ENCODE measurements at regions of chr14 and their contacts with region 1.

Region 1: DNA sequence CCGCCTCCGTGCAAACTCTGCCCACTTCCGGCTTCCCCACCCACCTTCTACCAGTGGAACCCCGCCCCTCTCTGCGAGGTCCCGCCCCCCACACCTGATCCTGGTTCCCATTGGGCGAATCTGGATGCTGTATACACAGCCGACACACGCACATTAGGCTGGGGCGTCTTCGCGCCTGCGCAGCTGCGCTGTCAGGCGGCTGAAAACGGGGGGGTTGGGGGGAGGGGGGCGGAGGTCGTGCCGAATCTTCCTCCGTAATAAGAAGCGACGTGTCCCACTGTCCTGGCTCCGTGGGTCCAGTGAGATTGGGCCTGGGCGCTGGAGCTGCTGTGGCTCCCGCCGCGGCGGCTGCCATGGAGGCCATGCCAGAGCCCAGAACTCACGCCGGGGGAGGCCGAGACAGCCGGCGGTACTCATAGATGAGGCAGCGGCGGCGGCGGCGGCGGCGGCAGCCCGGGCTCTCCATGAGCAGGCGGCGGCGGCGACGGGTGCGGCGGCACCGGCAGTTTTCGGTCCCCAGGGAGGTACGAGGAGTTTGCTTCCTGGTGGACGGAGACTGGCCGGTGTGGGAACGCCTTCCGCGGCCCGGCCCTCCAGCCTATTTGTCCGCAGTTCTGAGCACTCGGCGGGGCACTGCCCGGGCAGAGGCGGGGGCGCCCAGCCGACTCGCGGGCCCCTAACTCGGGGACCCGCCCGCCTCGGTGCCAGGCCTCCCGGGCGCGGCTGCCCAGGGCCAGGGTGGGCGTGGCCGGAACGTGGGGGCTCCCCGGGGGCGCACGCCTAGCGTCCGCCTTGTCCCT is 64.5 kb downstream of the KLHL28 start:
- DNase-seq: peak; percentile 98
- H3K4me3 ChIP-seq: peak overlapping the region; percentile 87
- H3K27ac ChIP-seq: peak overlapping the region; percentile 58
- H3K4me1 ChIP-seq: peaks cover 17% of the 10 kb centered on the region
- CTCF ChIP-seq: no peak

Region 2: GRCh38 chr14:44736326-44736725 is 160.9 kb before region 1 on chr14:
- CTCF ChIA-PET with region 1: no interaction called
- POLR2A ChIA-PET with region 1: no interaction called
- intact Hi-C with region 1: no loop called
- DNase-seq: no peak
- H3K4me3 ChIP-seq: no peak overlapping the region
- H3K27ac ChIP-seq: no peak overlapping the region
- H3K4me1 ChIP-seq: no peaks in the 10 kb centered on the region
- CTCF ChIP-seq: no peak

Region 3: GRCh38 chr14:44767642-44768173 is 129.5 kb before region 1 on chr14:
- CTCF ChIA-PET with region 1: no interaction called
- POLR2A ChIA-PET with region 1: no interaction called
- intact Hi-C with region 1: no loop called
- DNase-seq: no peak
- H3K4me3 ChIP-seq: no peak overlapping the region
- H3K27ac ChIP-seq: no peak overlapping the region
- H3K4me1 ChIP-seq: no peaks in the 10 kb centered on the region
- CTCF ChIP-seq: no peak

Region 4: GRCh38 chr14:44782775-44783238 is 114.4 kb before region 1 on chr14:
- CTCF ChIA-PET with region 1: no interaction called
- POLR2A ChIA-PET with region 1: no interaction called
- intact Hi-C with region 1: no loop called
- DNase-seq: no peak
- H3K4me3 ChIP-seq: no peak overlapping the region
- H3K27ac ChIP-seq: no peak overlapping the region
- H3K4me1 ChIP-seq: no peaks in the 10 kb centered on the region
- CTCF ChIP-seq: no peak

Region 5: GRCh38 chr14:44795725-44796124 is 101.5 kb before region 1 on chr14:
- CTCF ChIA-PET with region 1: no interaction called
- POLR2A ChIA-PET with region 1: no interaction called
- intact Hi-C with region 1: no loop called
- DNase-seq: no peak
- H3K4me3 ChIP-seq: no peak overlapping the region
- H3K27ac ChIP-seq: no peak overlapping the region
- H3K4me1 ChIP-seq: no peaks in the 10 kb centered on the region
- CTCF ChIP-seq: no peak

Region 6: DNA sequence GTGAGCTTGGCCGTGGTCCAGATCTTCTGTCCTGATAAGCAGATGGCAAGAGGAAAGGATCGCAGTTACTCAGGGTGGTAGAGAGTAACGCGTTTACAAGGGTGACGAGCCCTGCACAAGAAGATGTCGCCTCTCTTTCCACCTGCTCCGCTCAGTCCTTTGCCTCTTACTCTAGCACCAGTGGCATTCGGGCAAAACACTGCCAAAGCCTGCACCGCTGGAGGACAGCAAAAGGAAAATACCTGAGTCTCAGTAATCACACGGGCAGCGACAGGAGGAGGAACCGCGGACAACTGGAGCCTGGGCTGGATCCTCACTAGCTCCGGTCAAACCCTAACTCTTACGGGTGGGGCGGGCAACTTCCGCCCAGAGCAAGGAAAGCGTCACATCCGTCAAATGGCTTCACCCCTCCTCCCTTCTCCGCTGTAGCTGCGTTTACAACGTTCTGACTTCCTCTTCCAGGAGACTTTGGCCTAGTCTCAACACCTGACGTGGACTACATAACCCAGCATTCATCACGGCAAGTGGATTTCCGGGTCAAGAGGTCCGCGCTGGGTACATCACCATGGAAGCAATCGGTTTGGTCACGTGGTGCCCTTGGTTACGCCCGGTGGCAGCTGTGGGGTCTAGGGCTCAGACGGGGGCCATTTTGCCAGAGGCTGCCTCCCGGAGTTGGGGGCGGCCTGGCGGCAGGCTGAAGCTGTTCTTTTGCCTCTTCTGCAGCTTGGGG is 64.5 kb after region 1 on chr14 and contains the starts of genes KLHL28 and TOGARAM1:
- CTCF ChIA-PET with region 1: no interaction called
- POLR2A ChIA-PET with region 1: interaction called, 17 read pairs
- intact Hi-C with region 1: loop called (anchors 2 kb)
- DNase-seq: peak; percentile 99
- H3K4me3 ChIP-seq: peak within 1 kb of the TSS; percentile 86
- H3K27ac ChIP-seq: peak within 1 kb of the TSS; percentile 75
- H3K4me1 ChIP-seq: peaks cover 22% of the 10 kb centered on the region
- CTCF ChIP-seq: no peak
- total RNA-seq, gene KLHL28: 3.7 and 10.6 TPM in 2 replicates
- total RNA-seq, gene TOGARAM1: 11.4 and 12.4 TPM in 2 replicates

Region 7: DNA sequence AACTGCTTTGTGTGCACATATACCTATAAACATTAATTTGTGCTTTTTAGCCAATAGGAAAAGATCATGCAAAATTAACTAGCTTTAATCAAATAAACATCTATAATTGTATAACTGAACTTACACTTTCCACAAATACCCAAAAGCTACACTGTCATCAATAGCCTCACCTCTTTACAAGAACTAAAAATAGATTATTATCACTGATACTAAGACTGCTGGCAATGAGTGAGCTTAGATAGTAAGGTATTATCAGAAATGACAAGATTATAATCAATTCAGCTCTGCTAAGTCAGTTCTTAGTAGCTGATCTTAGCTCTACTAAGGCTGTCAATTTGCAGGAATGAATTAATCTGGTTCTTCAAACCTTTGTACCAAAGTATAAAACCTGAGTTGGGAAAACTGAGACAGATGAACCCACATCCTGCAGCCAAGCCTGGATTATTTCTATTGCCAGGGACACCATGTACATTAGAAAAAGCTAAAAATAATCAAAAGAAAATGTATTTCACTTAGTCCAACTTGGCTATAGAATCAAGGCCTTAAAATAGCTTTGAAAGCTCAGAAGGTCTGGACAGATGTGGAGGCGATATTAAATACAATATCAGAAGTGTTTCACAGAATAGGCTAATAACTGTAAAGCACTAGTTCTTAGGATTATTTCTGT is 231.9 kb after region 1 on chr14:
- CTCF ChIA-PET with region 1: no interaction called
- POLR2A ChIA-PET with region 1: interaction called, 10 read pairs
- intact Hi-C with region 1: loop called (anchors 2 kb)
- DNase-seq: no peak
- H3K4me3 ChIP-seq: no peak overlapping the region
- H3K27ac ChIP-seq: no peak overlapping the region
- H3K4me1 ChIP-seq: peaks cover 9% of the 10 kb centered on the region
- CTCF ChIP-seq: no peak

Region 8: DNA sequence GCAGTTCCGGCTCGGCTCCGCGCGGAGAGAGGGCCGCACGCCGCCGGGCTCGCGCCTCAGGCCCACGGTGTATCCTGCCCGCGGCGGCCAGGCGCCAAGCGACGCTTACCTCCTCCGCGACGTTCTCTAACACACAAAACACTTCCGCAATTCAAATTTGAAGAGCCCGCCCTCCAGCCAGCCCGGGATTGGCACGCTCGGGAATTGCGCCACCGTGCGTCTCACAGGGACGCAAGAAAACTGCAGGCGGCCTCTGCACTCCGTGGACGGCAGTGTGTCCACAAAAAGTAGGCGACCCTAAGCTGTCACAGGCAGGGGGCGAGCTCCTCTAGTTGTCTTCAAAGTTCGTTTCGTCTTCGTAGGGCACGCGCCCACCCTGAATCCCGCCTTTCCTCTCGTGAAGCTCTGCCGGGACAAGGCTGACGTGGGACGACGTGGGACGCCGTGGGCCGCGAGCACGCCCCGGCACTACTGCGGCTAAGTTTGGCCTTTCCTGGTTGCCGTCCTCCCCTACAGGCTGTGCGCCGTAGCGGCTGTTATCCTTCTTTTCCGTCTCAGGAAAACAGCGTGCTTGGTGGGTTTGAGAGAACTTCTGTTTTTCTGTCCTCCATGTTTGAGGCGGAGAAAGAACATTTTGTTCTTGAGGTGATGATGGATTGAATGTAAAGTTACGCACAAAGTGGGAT is 356.0 kb after region 1 on chr14 and contains the start of gene MIS18BP1:
- CTCF ChIA-PET with region 1: no interaction called
- POLR2A ChIA-PET with region 1: interaction called, 4 read pairs
- intact Hi-C with region 1: loop called (anchors 1 kb)
- DNase-seq: peak; percentile 98
- H3K4me3 ChIP-seq: peak within 1 kb of the TSS; percentile 78
- H3K27ac ChIP-seq: peak within 1 kb of the TSS; percentile 88
- H3K4me1 ChIP-seq: peaks cover 26% of the 10 kb centered on the region
- CTCF ChIP-seq: peak; percentile 84
- total RNA-seq, gene MIS18BP1: 99.2 and 116 TPM in 2 replicates